Activated CD4-positive, alpha-beta memory T cell treated with anti-CD3 and anti-CD28 coated beads for 36 hours (primary cell): ENCODE measurements at regions of chr19 and their contacts with region 1.

Region 1: GRCh38 chr19:42440357-42441048 is 2.2 kb downstream of the CXCL17 start:
- DNase-seq: peak; percentile 88
- H3K4me3 Mint-ChIP-seq: no peak overlapping the region
- H3K27ac Mint-ChIP-seq: no peak overlapping the region
- H3K4me1 Mint-ChIP-seq: peaks cover 20% of the 10 kb centered on the region
- H3K27me3 Mint-ChIP-seq: no peaks in the 10 kb centered on the region

Region 2: DNA sequence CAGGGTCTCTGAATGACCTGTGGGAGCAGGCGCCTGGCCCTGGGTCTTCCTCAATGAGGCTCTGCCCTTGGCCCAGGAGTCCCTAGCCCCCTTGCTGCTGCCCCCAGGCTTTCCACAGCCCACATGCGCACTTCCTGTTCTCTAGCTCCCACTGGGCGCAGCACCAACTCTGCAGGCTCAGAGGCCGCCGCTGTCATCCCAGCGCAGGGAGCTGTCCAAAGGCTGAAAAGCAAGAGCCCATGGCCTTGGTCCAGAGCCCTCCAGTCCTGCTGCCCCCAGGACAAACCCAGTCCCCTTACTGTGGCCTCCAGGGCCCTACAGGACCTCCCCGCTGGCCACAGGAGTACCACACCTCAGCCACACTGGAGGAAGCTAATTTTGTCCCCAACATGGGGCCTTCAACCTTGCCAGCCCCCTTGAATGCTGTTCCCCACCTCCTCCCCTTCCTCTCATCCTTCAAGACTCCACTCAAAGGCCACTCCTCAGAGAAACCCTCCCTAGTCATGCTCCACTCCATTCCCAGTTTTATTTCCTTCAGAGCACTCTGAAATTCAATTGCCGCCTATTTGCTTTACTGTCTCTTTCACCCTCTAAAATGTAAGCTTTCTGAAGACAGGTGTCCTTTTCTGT is 300.3 kb before region 1 on chr19:
- CTCF ChIA-PET with region 1: no interaction called
- POLR2A ChIA-PET with region 1: no interaction called
- intact Hi-C with region 1: no loop called
- DNase-seq: peak; percentile 54
- H3K4me3 Mint-ChIP-seq: no peak overlapping the region
- H3K27ac Mint-ChIP-seq: no peak overlapping the region
- H3K4me1 Mint-ChIP-seq: peaks cover 6% of the 10 kb centered on the region
- H3K27me3 Mint-ChIP-seq: no peaks in the 10 kb centered on the region

Region 3: GRCh38 chr19:42363614-42364346 is 76.7 kb before region 1 on chr19:
- CTCF ChIA-PET with region 1: no interaction called
- POLR2A ChIA-PET with region 1: no interaction called
- intact Hi-C with region 1: no loop called
- DNase-seq: no peak
- H3K4me3 Mint-ChIP-seq: no peak overlapping the region
- H3K27ac Mint-ChIP-seq: no peak overlapping the region
- H3K4me1 Mint-ChIP-seq: no peaks in the 10 kb centered on the region
- H3K27me3 Mint-ChIP-seq: no peaks in the 10 kb centered on the region

Region 4: GRCh38 chr19:42386974-42387707 is 53.4 kb before region 1 on chr19:
- CTCF ChIA-PET with region 1: interaction called, 12 read pairs
- POLR2A ChIA-PET with region 1: no interaction called
- intact Hi-C with region 1: no loop called
- DNase-seq: peak; percentile 76
- H3K4me3 Mint-ChIP-seq: peak overlapping the region; percentile 58
- H3K27ac Mint-ChIP-seq: no peak overlapping the region
- H3K4me1 Mint-ChIP-seq: peaks cover 4% of the 10 kb centered on the region
- H3K27me3 Mint-ChIP-seq: peaks cover 29% of the 10 kb centered on the region

Region 5: DNA sequence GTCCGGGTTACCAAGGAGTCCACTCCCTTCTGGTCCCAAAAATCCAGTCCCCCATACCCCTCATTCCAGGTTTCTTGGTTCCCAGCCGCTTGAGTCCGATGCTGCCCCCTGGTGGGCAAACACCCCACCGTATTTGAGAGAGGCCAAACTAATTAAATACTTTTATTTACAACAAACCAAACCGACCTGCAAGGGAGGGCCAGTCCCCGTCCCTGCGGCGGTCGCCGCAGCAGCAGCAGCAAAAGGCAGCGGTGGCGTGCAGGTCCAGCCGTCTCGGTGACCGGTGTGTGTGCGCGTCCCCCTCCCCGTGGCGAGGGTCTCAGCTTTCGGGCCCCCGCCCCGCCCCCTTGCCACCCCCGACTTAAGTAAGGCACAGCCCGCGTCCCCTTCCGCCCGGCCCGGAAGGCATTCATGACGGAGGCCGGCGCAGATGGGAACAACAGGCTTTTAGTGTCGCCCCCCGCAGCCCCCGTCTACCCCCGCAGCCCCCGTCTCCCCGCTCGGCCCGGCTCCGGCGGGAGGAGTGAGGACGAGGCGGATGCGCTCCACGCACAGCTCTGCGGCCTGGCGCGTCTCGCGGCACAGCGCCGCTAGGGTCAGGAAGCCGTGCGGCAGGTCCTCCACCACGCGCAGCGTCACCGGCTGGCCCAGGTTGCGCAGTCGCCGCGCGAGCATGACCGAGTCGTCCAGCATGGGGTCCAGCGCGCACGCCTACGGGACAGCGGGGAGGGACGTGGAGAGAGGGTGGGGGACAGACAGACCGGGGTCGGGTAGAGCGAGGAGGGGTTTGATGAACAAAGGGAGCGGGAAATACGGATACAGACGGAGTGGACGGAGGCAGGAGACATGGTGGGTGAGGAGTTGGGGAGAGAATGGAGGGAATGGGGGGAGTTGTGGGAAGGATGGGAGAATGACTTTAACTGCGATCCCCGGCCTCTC is 38.9 kb before region 1 on chr19:
- CTCF ChIA-PET with region 1: interaction called, 10 read pairs
- POLR2A ChIA-PET with region 1: interaction called, 3 read pairs
- intact Hi-C with region 1: no loop called
- DNase-seq: peak; percentile 78
- H3K4me3 Mint-ChIP-seq: peak overlapping the region; percentile 71
- H3K27ac Mint-ChIP-seq: peak overlapping the region; percentile 45
- H3K4me1 Mint-ChIP-seq: peaks cover 35% of the 10 kb centered on the region
- H3K27me3 Mint-ChIP-seq: no peaks in the 10 kb centered on the region

Region 6: GRCh38 chr19:42423462-42424344 is 16.8 kb before region 1 on chr19:
- CTCF ChIA-PET with region 1: interaction called, 40 read pairs
- POLR2A ChIA-PET with region 1: no interaction called
- intact Hi-C with region 1: loop called (anchors 2 kb)
- DNase-seq: peak; percentile 97
- H3K4me3 Mint-ChIP-seq: peak overlapping the region; percentile 92
- H3K27ac Mint-ChIP-seq: peak overlapping the region; percentile 87
- H3K4me1 Mint-ChIP-seq: peaks cover 37% of the 10 kb centered on the region
- H3K27me3 Mint-ChIP-seq: no peaks in the 10 kb centered on the region

Region 7: DNA sequence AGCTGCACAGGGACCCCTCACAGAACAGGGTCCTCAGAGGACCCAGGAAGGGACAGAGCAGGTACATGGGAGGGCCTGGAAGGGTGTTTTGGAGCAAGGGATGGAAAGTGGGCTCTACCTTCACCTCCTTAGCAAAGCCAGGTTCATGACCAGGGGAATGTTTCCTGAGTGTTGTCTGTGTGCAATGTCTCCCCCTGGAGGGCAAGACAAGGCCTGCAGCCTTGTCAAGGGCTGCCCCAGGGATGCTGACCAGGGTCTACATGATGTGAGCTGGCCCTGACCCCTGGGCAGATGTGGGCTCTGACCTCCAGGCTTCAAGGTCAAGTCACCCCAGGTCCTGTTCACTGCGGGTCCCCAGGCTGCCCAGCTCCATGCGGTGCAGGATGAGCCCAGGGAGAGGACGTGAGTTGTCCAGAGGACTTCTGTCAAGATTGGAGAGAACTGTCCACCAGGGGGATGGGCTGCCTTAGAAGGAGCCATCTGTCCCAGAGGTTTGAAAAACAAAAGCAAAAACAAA is 88.8 kb after region 1 on chr19:
- CTCF ChIA-PET with region 1: interaction called, 58 read pairs
- POLR2A ChIA-PET with region 1: no interaction called
- intact Hi-C with region 1: no loop called
- DNase-seq: peak; percentile 82
- H3K4me3 Mint-ChIP-seq: peak overlapping the region; percentile 72
- H3K27ac Mint-ChIP-seq: peak overlapping the region; percentile 66
- H3K4me1 Mint-ChIP-seq: peaks cover 33% of the 10 kb centered on the region
- H3K27me3 Mint-ChIP-seq: no peaks in the 10 kb centered on the region

Region 8: DNA sequence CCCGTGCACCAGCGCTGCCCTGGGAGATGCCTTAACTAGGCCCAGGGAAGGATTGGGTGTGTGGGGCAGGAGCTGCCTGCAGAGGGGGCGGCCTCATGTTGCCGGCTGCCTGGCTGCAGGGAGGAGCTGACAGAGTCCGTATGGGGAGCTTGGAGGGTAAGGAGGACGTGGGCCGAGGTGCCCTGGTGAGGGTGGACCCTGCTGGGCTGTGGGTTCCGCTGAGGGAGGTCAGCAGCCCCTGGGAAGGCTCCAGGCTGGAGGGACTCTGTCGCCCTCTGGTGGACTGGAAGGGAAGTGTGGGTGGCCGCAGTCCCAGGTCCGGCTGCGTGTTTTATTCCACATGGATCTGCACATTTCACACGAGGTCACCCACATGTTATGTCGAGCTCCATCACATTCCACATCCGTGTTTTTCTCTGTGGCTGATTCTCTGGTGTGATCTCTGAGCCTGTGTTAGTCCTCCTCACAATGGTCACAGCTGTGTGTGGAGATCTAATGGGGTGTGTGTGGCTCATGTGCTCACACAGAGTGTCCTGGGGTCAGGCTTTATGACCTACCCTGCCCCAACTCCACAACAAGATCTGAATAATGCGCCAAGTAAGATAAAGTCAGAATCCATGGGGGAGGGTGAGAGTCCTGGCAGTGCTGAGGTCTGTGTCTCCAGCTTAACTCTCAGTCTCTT is 156.0 kb after region 1 on chr19:
- CTCF ChIA-PET with region 1: interaction called, 11 read pairs
- POLR2A ChIA-PET with region 1: no interaction called
- intact Hi-C with region 1: no loop called
- DNase-seq: peak; percentile 48
- H3K4me3 Mint-ChIP-seq: no peak overlapping the region
- H3K27ac Mint-ChIP-seq: no peak overlapping the region
- H3K4me1 Mint-ChIP-seq: no peaks in the 10 kb centered on the region
- H3K27me3 Mint-ChIP-seq: peaks cover 12% of the 10 kb centered on the region

Region 9: DNA sequence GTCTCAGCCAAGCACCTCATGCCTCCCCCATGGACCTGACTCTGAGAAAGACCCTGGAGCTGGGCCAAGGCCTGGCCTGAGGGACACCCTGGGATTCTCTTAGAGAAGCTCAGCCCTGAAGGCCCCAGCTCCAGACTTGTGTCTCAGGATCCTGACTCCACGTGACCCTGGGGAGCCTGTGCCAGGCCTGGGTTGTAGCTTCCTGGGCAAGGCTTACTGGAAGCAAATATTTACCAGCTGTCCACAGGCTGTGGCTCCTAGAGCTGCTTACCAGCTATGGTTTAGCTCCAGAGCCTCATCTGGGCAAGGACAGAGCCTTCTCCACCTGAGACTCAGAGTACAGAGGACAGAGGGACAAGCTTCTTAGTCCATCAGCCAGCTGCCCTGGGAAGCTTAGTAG is 215.2 kb after region 1 on chr19:
- CTCF ChIA-PET with region 1: no interaction called
- POLR2A ChIA-PET with region 1: no interaction called
- intact Hi-C with region 1: no loop called
- DNase-seq: no peak
- H3K4me3 Mint-ChIP-seq: no peak overlapping the region
- H3K27ac Mint-ChIP-seq: no peak overlapping the region
- H3K4me1 Mint-ChIP-seq: no peaks in the 10 kb centered on the region
- H3K27me3 Mint-ChIP-seq: peaks cover 18% of the 10 kb centered on the region

Region 10: DNA sequence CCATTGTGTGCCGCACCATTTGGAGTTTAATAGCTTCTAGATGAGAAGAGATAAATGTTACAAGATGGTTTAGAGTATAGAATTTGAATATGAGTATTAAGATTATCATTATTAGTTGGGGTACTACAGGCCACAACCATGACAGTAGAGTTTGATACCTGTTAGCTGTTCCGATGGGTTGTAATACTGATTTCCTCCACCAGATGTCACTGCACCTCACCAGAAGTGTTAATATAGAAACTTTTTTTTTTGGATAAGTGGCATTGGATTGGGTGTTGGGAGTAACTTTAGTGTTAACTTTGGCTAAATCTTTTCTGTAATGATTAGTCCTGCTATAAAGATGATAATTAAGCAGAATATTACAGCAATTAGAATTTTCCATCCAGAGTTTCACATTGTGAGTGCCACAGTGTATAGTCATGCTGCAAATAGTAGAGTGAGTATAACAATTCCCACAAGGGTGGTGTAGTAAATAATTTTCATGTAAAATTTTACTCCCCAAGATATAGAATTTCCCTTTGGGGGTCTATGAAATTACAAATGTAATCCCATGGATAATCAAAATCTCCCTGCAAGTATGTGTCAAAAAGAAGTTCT is 243.5 kb after region 1 on chr19:
- CTCF ChIA-PET with region 1: no interaction called
- POLR2A ChIA-PET with region 1: no interaction called
- intact Hi-C with region 1: no loop called
- DNase-seq: no peak
- H3K4me3 Mint-ChIP-seq: no peak overlapping the region
- H3K27ac Mint-ChIP-seq: no peak overlapping the region
- H3K4me1 Mint-ChIP-seq: no peaks in the 10 kb centered on the region
- H3K27me3 Mint-ChIP-seq: peaks cover 3% of the 10 kb centered on the region